ENCODE measurements at regions of chr11 and their contacts with region 1.

Region 1: DNA sequence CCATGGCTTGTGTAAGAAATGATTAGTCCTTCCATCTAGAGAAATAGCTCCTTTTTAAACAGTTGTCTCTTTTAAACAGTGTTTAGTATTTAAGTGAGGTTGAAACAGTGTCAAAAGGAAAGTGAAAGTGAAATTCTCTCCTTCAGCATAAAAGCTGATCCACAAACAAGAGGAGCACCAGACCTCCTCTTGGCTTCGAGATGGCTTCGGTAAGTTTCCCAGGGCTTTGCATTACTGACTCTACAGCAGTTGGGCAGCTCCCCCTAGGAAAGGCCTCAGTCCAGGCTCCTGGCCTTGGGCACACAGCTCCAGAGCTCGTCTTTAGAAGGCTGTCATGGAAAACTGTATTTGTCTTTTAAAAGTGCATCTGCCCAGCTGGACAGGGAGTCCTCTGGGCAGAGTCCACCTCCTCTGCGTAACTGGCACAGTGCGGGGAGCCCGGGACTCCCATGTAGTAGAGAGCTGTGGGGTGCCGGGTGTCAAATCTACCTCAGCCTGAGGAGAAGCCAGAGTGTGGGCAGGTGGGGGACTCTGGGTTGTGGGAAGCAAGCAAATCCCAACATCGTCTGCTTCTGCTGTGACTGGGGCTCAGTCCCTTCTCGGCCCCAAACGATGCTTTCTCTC is at the start of gene PLAAT4:
- DNase-seq: no peak
- H3K4me3 ChIP-seq: peak within 1 kb of the TSS; percentile 49
- H3K27ac ChIP-seq: no peak within 1 kb of the TSS
- H3K4me1 ChIP-seq: peaks cover 17% of the 10 kb centered on the region
- CTCF ChIP-seq: no peak
- total RNA-seq, gene PLAAT4: 6.5 and 6.8 TPM in 2 replicates

Region 2: DNA sequence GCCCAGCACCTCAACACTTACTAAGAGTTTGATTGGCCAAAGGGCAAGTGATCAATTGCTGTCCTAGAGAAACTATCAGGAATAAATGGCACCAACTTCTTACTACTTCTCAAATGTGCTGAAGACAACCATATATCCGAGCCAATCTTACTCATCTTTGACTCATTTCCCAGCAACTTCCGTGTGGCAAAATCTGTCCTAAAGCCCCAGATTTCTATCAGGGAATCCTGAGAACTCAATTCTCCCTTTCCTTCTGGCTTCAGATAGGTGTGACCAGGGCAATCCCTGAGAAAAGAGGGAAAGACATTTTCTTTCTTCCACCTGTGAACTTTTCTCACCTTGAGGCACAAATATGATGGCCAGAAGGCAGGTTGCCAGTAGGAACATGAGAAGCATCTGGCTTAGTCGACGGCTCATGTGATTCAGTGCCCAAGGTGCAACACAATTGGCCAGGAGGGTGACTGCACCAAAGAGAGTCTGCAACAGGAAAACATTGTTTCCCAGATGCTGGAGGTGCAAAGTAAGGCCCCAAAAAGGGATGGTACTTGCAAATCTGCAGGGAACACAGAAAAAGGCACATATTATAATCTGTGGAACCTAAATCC is 371.0 kb before region 1 on chr11:
- CTCF ChIA-PET with region 1: no interaction called
- POLR2A ChIA-PET with region 1: no interaction called
- intact Hi-C with region 1: no loop called
- DNase-seq: no peak
- H3K4me3 ChIP-seq: no peak overlapping the region
- H3K27ac ChIP-seq: no peak overlapping the region
- H3K4me1 ChIP-seq: no peaks in the 10 kb centered on the region
- CTCF ChIP-seq: no peak

Region 3: DNA sequence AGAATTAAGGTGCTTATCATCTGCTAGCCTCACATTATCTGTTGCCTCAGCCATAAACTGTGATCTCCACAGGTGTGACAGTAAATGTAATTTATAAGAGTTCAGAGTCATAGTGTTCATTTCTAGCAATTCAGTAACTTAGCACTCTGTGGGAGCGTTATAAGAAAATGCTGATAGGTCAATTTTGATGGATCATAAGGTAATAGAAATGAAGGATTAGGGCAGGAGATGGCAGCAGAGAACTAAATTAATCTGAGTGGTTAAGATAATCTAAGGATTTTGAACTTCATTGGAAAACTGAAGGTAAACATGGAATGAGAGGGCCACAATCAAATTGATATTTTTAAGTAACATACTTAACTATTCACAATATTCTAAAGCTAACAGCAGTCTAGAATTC is 193.7 kb before region 1 on chr11:
- CTCF ChIA-PET with region 1: no interaction called
- POLR2A ChIA-PET with region 1: no interaction called
- intact Hi-C with region 1: no loop called
- DNase-seq: no peak
- H3K4me3 ChIP-seq: no peak overlapping the region
- H3K27ac ChIP-seq: no peak overlapping the region
- H3K4me1 ChIP-seq: no peaks in the 10 kb centered on the region
- CTCF ChIP-seq: no peak

Region 4: DNA sequence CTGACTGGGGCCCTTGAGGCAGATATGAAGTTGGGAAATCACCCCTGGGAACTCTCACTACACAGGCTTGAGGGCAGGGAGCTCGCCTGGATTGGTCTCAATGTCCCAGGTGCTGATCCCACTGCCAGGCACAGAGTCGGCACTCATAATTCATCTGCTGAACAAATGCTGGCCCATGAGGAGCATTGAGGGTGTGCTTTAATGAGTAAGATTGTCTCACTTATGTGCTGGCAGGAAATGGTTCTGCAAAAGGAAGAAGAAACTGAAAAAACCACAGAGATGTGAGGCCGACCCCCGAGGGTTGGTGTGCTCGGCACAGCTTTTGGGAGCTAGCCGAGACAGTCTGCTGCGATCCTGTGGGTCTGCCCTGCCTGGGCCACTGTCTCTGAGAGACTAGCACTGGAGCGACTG is 17.0 kb after region 1 on chr11:
- CTCF ChIA-PET with region 1: no interaction called
- POLR2A ChIA-PET with region 1: interaction called, 10 read pairs
- intact Hi-C with region 1: no loop called
- DNase-seq: peak; percentile 65
- H3K4me3 ChIP-seq: no peak overlapping the region
- H3K27ac ChIP-seq: peak overlapping the region; percentile 2
- H3K4me1 ChIP-seq: peaks cover 47% of the 10 kb centered on the region
- CTCF ChIP-seq: no peak

Measured in OCI-LY7 (cell line).